WTC11 (cell line): ENCODE measurements at regions of chr20 and their contacts with region 1.

Region 1: GRCh38 chr20:34704177-34705007 is at the start of gene TP53INP2:
- DNase-seq: peak; percentile 93
- ATAC-seq: peak; percentile 60
- H3K4me3 Mint-ChIP-seq: peak within 1 kb of the TSS; percentile 94
- H3K27ac Mint-ChIP-seq: peak within 1 kb of the TSS; percentile 87
- H3K4me1 Mint-ChIP-seq: peaks cover 17% of the 10 kb centered on the region
- H3K27me3 Mint-ChIP-seq: peaks cover 50% of the 10 kb centered on the region
- CTCF ChIP-seq: no peak
- total RNA-seq, gene TP53INP2: 3.8 to 4.3 TPM (median 4.1 TPM) in 3 replicates

Region 2: GRCh38 chr20:34538671-34539123 is 165.7 kb before region 1 on chr20:
- CTCF ChIA-PET with region 1: interaction called, 17 read pairs
- POLR2A ChIA-PET with region 1: no interaction called
- DNase-seq: peak; percentile 72
- ATAC-seq: peak; percentile 70
- H3K4me3 Mint-ChIP-seq: no peak overlapping the region
- H3K27ac Mint-ChIP-seq: peak overlapping the region; percentile 49; the same call in 1 of the 2 replicates
- H3K4me1 Mint-ChIP-seq: peaks cover under 1% of the 10 kb centered on the region; the same call in 1 of the 2 replicates
- H3K27me3 Mint-ChIP-seq: no peaks in the 10 kb centered on the region
- CTCF ChIP-seq: peak; percentile 60

Region 3: DNA sequence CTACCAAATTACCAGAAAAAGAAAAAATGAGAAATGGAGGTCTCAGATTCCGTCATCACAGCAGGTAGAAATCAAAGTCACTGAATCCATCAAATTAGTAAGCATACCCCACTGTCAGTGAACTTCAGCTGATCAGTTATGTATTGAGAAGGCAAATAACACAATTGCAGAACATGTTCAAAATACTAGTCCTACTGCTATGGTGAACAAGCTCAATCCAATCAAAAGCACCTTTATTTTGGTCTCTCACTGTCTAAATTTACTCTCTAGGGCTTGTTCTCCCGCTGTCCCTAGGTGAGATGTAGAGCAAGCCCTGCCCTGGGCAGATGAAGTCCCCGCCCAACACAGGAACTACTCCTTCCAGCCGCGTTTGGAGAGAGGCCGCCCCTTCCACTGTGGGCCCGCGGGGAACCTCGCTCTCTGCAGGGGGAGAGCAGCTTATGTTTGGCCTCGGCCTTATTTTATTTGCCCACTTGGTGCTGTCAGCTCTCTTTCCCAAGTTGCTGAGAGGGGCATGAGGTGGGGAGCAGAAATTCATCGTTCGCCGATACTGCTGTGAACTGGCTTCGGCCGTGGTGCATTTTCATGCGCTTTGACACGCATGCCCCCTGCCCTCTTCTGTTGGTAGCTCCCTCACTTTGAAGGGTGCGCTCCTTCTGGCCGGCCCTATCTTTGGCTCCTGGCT is 160.1 kb before region 1 on chr20:
- CTCF ChIA-PET with region 1: interaction called, 16 read pairs
- POLR2A ChIA-PET with region 1: no interaction called
- DNase-seq: peak; percentile 48
- ATAC-seq: peak; percentile 89
- H3K4me3 Mint-ChIP-seq: peak overlapping the region; percentile 56
- H3K27ac Mint-ChIP-seq: no peak overlapping the region; the same call in 1 of the 2 replicates
- H3K4me1 Mint-ChIP-seq: peaks cover 13% of the 10 kb centered on the region
- H3K27me3 Mint-ChIP-seq: 0 out of 2 replicates have a peak, but pooled peaks cover 3% of the 10 kb centered on the region
- CTCF ChIP-seq: no peak

Region 4: DNA sequence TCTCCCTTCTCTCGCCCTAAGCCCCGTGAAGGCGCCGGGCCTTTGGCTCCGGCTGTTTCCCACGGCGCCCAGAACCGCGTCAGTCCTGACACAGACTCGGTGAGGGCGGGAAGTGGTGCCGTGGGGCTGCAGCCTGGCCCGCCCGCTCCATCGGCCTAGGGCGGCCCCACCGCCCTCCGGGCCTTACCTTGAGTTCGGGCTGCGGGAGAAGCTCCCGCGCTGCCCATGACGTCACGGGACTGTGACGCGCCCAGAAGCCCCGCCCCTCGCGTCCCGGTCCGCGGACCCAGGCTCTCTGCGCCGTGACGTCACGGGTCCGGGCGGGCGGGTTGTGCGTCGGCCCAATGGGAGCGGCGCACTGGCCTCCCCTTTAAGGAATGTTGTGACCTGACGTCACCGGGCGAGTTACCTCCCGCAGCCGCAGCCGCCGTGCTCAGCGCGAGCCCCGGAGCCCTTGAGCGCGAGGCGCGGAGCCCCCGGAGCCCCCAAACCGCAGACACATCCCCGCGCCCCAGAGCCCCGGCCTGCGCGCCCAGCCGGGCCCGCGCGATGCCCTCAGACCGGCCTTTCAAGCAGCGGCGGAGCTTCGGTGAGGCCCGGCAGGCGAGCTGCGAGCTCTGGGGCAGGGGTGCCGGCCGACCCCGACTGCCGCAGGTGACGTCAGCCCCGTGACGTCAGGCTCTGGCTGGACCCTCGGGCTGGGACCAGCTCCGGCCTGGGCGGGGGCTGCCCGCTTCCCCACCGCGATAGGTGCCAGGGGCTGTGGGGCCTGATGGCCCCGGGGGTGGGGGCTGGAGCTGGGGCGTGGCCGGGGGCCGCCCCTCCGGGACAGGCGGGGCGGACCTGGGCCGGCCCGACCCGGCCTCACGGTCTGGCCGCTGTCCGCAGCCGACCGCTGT is 145.8 kb before region 1 on chr20 and contains the start of gene MAP1LC3A:
- CTCF ChIA-PET with region 1: interaction called, 50 read pairs
- POLR2A ChIA-PET with region 1: interaction called, 4 read pairs
- DNase-seq: peak; percentile 95
- ATAC-seq: peak; percentile 75
- H3K4me3 Mint-ChIP-seq: peak within 1 kb of the TSS; percentile 75
- H3K27ac Mint-ChIP-seq: peak within 1 kb of the TSS; percentile 44
- H3K4me1 Mint-ChIP-seq: peaks cover 4% of the 10 kb centered on the region
- H3K27me3 Mint-ChIP-seq: peaks cover 7% of the 10 kb centered on the region
- CTCF ChIP-seq: no peak
- total RNA-seq, gene MAP1LC3A: 7.5 to 12.1 TPM (median 11.3 TPM) in 3 replicates

Region 5: DNA sequence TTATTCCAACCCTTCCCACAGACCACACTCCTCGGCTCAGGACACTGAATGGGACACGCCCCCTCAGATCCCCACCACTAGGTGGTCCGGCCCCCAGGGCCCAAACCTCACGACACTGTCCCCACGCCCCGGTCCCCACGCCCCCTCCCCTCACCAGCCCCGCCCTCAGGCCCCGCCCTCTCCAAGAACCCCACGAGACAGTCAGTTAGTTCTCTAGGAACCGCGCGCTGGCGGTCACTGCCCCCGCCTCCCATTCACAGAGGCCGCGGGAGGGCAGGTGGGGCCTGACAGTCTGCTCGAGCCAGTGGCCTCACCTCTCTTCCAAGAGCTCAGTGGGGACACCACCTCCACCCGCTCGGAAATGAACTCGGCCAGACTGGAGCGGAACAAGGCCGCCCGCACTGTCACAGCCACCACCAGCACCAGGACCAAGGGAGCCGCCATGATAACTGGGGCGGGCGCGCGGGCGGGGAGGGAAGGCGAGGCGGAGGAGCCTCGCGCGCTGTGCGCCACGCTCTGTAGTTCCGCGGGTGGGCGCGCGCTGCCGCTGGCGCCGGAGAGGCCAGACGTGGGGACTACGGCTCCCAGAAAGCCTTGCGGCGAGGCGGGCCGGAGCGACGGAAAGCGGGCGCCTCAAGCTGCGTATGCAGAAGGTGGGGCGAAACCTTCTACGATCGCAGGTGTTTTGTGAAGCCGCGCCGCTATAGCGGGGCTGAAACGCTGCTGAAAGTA is 27.6 kb before region 1 on chr20 and contains the start of gene PIGU:
- CTCF ChIA-PET with region 1: interaction called, 13 read pairs
- POLR2A ChIA-PET with region 1: interaction called, 5 read pairs
- DNase-seq: peak; percentile 96
- ATAC-seq: peak; percentile 90
- H3K4me3 Mint-ChIP-seq: peak within 1 kb of the TSS; percentile 99
- H3K27ac Mint-ChIP-seq: peak within 1 kb of the TSS; percentile 98
- H3K4me1 Mint-ChIP-seq: peaks cover 6% of the 10 kb centered on the region
- H3K27me3 Mint-ChIP-seq: no peaks in the 10 kb centered on the region; the same call in 1 of the 2 replicates
- CTCF ChIP-seq: no peak
- total RNA-seq, gene PIGU: 24.8 to 31.7 TPM (median 28.7 TPM) in 3 replicates